ENCODE measurements at regions of chr1 and their contacts with region 1.

Region 1: GRCh38 chr1:66446261-66447001 is 87.5 kb upstream of the SGIP1 start:
- DNase-seq: peak; percentile 50
- H3K4me3 Mint-ChIP-seq: peak overlapping the region; percentile 69
- H3K27ac Mint-ChIP-seq: peak overlapping the region; percentile 96
- H3K4me1 Mint-ChIP-seq: peaks cover 31% of the 10 kb centered on the region
- H3K27me3 Mint-ChIP-seq: peaks cover 13% of the 10 kb centered on the region

Region 2: GRCh38 chr1:65958561-65959350 is 487.7 kb before region 1 on chr1:
- CTCF ChIA-PET with region 1: interaction called, 53 read pairs
- DNase-seq: no peak
- H3K4me3 Mint-ChIP-seq: no peak overlapping the region
- H3K27ac Mint-ChIP-seq: no peak overlapping the region
- H3K4me1 Mint-ChIP-seq: peaks cover 6% of the 10 kb centered on the region
- H3K27me3 Mint-ChIP-seq: no peaks in the 10 kb centered on the region

Region 3: DNA sequence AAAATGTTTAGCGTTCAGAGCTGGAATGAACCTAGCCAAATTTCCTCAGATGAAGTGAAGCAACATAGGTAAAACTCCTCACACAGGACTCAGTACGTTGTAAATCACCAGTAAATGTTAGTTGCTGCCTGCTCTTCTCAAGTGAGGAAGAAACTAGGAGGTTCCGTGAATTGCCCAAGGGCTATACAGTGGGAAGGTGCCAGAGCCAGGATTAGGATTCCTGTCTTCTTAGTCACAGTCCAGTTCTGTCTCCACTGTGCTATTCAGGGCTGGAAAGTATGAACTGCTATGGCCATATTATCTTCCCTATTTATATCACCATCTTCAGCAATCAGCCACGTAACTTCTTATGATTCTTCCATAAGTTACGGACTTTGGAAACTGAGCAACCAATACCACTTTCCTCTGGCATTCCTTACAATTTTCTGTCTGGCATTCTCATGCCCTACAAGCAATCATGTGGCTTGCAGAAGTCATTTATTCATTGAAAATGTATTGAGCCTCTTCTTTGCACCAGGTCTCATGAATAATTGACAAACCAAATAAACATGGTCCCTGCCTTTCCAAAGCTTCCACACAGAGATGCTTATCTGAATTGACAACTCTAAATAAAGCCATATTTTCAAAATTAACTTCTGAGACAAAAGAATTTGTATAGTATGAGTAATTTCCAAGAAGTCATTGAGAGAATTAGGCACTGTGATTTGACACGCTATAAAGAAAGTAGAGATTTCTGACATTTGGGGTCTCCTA is 184.0 kb before region 1 on chr1:
- CTCF ChIA-PET with region 1: interaction called, 565 read pairs
- DNase-seq: no peak
- H3K4me3 Mint-ChIP-seq: no peak overlapping the region
- H3K27ac Mint-ChIP-seq: no peak overlapping the region
- H3K4me1 Mint-ChIP-seq: peaks cover 70% of the 10 kb centered on the region
- H3K27me3 Mint-ChIP-seq: no peaks in the 10 kb centered on the region

Region 4: DNA sequence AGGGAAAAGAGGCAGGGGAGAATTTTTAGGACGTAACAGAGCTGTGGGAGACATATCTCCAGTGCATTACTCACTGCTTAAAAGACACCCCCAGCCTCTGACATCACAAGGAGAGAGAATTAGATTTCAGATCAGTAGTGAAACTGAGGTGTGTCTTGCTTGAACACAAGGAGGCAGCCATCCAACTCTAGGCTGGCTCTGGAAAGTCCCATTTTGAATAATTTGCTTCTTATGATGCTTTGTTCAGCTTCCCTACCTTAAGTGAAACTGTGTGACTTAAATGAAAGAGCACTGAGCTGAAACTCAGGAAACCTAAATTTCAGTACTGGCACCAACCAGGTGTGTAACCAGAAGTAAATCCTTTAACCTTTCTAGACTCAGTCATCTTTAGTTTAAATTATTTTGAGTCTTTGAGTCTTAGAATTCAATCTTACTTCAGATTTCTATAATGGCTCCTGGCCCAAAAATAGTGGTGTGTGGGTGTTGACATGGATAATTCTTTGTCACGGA is 164.0 kb before region 1 on chr1:
- CTCF ChIA-PET with region 1: interaction called, 22 read pairs
- DNase-seq: peak; percentile 77
- H3K4me3 Mint-ChIP-seq: no peak overlapping the region
- H3K27ac Mint-ChIP-seq: peak overlapping the region; percentile 90
- H3K4me1 Mint-ChIP-seq: peaks cover 92% of the 10 kb centered on the region
- H3K27me3 Mint-ChIP-seq: no peaks in the 10 kb centered on the region

Region 5: DNA sequence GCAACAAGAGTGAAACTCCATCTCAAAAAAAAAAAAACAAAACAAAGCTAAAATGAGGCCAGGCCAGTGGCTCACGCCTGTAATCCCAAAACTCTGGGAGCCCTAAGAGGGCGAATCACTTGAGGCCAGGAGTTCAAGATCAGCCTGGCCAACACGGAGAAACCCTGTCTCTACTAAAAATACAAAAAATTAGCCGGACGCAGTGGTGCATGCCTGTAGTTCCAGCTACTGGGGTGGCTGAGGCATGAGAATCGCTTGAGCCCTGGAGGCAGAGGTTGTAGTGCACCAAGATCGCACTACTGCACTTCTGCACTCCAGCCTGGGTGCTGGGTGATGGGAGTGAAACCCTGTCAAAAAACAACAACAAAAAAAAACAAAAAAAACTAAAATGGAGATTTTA is 103.7 kb before region 1 on chr1:
- CTCF ChIA-PET with region 1: interaction called, 30 read pairs
- DNase-seq: no peak
- H3K4me3 Mint-ChIP-seq: no peak overlapping the region
- H3K27ac Mint-ChIP-seq: no peak overlapping the region
- H3K4me1 Mint-ChIP-seq: peaks cover 84% of the 10 kb centered on the region
- H3K27me3 Mint-ChIP-seq: no peaks in the 10 kb centered on the region

Region 6: GRCh38 chr1:66360285-66360724 is 86.1 kb before region 1 on chr1:
- CTCF ChIA-PET with region 1: interaction called, 35 read pairs
- DNase-seq: no peak
- H3K4me3 Mint-ChIP-seq: no peak overlapping the region
- H3K27ac Mint-ChIP-seq: peak overlapping the region; percentile 43
- H3K4me1 Mint-ChIP-seq: peaks cover 82% of the 10 kb centered on the region
- H3K27me3 Mint-ChIP-seq: no peaks in the 10 kb centered on the region

Region 7: DNA sequence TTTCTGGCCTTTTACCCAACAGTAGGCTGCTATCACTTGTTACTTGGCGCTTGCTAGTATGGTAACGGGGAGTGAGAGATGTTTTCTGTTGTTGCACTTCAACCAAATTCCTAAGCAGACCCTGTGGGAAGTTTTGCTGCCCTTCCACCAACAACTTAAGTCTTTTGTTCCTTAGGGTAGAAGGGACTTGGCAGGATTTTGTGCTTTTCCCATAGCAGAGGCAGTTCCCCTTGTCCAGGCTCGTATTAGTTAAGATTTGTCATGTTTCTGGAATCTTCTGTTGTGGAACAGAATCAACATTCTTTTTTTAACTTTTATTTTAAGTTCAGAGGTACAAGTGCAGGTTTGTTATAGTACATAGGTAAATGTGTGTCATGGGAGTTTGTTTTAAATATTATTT is 14.3 kb after region 1 on chr1:
- CTCF ChIA-PET with region 1: no interaction called
- DNase-seq: no peak
- H3K4me3 Mint-ChIP-seq: no peak overlapping the region
- H3K27ac Mint-ChIP-seq: no peak overlapping the region
- H3K4me1 Mint-ChIP-seq: no peaks in the 10 kb centered on the region
- H3K27me3 Mint-ChIP-seq: no peaks in the 10 kb centered on the region

Region 8: DNA sequence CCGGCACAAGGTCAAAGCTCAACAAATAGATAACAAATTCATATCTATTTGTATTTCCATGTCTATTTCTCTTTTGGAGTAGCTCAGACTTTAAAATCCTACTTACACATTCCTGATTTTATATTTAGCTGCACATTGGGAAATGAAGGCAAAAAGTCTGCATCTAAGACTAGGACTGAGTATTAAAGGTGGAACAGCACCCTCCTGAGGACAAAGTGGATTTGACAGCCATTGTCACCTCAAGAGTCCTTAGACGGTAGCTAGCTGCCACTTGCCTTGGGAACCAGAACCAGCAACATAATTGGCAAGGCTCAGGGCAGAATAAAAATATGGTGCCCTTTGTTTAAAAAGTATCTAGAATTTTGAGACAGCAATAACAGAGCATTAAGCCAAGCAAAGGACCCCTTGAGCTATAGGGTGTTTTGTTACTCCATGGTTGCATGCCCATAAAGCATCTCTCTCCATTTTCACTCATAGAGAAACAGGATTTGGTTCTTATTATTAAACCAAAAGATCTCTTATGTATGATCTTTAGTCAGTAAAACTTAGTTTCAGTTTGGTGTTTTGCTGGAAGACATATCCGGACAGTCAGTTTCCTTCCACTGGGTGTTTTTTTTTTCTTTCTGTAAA is 57.5 kb after region 1 on chr1:
- CTCF ChIA-PET with region 1: interaction called, 11 read pairs
- DNase-seq: peak; percentile 49
- H3K4me3 Mint-ChIP-seq: no peak overlapping the region
- H3K27ac Mint-ChIP-seq: no peak overlapping the region
- H3K4me1 Mint-ChIP-seq: no peaks in the 10 kb centered on the region
- H3K27me3 Mint-ChIP-seq: peaks cover 15% of the 10 kb centered on the region

Region 9: GRCh38 chr1:66521721-66522365 is 75.4 kb after region 1 on chr1:
- CTCF ChIA-PET with region 1: no interaction called
- DNase-seq: no peak
- H3K4me3 Mint-ChIP-seq: no peak overlapping the region
- H3K27ac Mint-ChIP-seq: no peak overlapping the region
- H3K4me1 Mint-ChIP-seq: no peaks in the 10 kb centered on the region
- H3K27me3 Mint-ChIP-seq: no peaks in the 10 kb centered on the region